ENCODE measurements at regions of chr16 and their contacts with region 1.

Region 1: GRCh38 chr16:15704545-15704987 is 54.5 kb downstream of the NDE1 start:
- DNase-seq: peak; percentile 39
- ATAC-seq: peak; percentile 93
- H3K4me3 ChIP-seq: no peak overlapping the region
- H3K27ac ChIP-seq: no peak overlapping the region
- H3K4me1 ChIP-seq: no peaks in the 10 kb centered on the region
- H3K27me3 ChIP-seq: no peaks in the 10 kb centered on the region
- CTCF ChIP-seq: peak; percentile 64 to 90 (median 84); a peak in 5 of 6 replicates
- POLR2A ChIP-seq: no peak
- RAD21 ChIP-seq: peak; percentile 82

Region 2: GRCh38 chr16:15523092-15523541 is 181.4 kb before region 1 on chr16:
- CTCF ChIA-PET with region 1: no interaction called
- POLR2A ChIA-PET with region 1: no interaction called
- RAD21 ChIA-PET with region 1: no interaction called
- intact Hi-C with region 1: loop called (anchors 1 kb)
- DNase-seq: peak; percentile 45
- ATAC-seq: peak; percentile 88
- H3K4me3 ChIP-seq: peak overlapping the region; percentile 4; a peak in 1 of 4 replicates
- H3K27ac ChIP-seq: no peak overlapping the region
- H3K4me1 ChIP-seq: peaks cover 4 to 22% of the 10 kb centered on the region in 2 experiments
- H3K27me3 ChIP-seq: no peaks in the 10 kb centered on the region
- CTCF ChIP-seq: peak; percentile 21 to 51 (median 28); a peak in 4 of 6 replicates
- POLR2A ChIP-seq: no peak
- RAD21 ChIP-seq: peak; percentile 79

Region 3: DNA sequence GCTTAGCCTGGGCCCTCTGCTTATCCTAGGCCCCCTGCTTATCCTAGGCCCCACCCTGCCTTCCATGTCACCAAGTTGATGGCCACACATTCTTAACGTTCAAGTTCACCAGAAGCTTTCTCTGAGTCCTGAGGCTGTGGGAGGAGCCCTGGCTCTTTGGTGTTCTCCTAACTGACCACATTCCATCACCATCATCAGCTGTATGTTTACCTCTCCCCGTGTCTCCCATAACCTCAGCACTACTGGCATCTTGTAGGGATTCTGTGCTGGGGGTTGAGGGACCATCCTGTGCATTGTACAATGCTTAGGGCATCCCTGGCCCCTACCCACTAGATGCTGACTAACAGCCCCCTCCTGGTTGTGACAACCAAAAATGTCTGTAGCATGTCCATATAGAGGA is 44.8 kb after region 1 on chr16:
- CTCF ChIA-PET with region 1: no interaction called
- POLR2A ChIA-PET with region 1: no interaction called
- RAD21 ChIA-PET with region 1: no interaction called
- intact Hi-C with region 1: no loop called
- DNase-seq: no peak
- ATAC-seq: no peak
- H3K4me3 ChIP-seq: no peak overlapping the region
- H3K27ac ChIP-seq: no peak overlapping the region
- H3K4me1 ChIP-seq: peaks cover 0 to 6% of the 10 kb centered on the region in 2 experiments; a peak in 3 of 4 replicates
- H3K27me3 ChIP-seq: no peaks in the 10 kb centered on the region
- CTCF ChIP-seq: no peak
- POLR2A ChIP-seq: no peak
- RAD21 ChIP-seq: no peak